ENCODE measurements at regions of chr4 and their contacts with region 1.

Region 1: DNA sequence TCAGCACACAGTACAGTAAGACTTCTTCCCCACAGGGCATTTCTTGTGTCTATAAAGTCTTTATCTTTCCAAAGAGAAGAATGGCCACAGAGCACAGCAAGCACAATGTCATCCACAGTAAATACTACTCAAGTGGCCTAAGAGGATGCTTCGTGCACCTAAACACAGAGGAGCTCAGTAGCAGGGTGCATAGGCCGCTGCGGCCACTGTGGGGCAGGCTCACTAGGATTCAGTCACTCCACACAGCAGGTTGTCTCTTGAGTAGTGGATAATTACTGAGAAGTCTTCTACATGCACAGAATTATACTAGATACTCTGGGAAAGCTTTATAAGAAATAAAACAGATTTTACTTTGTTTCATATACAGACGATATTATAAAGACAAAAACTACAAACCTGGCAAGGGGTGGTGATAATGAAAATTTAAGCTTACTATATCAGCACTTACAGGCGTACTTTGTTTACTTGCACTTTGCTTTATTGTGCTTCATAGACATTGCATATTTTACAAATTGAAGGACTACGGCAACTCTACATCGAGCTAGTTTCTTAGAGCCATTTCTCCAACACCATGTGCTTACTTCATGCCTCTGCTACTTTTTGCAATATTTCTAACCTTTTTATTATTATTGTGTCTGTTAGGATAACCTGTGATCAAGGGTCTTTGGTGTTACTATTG is 78.5 kb downstream of the PRDM5 start:
- DNase-seq: peak; percentile 13 to 61
- H3K4me3 ChIP-seq: no peak overlapping the region
- H3K27ac ChIP-seq: no peak overlapping the region
- H3K4me1 ChIP-seq: no peaks in the 10 kb centered on the region
- H3K27me3 ChIP-seq: no peaks in the 10 kb centered on the region
- CTCF ChIP-seq: peak; percentile 67 to 81 (median 78)
- EP300 ChIP-seq: no peak
- POLR2A ChIP-seq: no peak
- RAD21 ChIP-seq: peak; percentile 59 to 68; a peak in 3 of 4 replicates

Region 2: GRCh38 chr4:120829113-120829831 is 14.7 kb before region 1 on chr4:
- CTCF ChIA-PET with region 1: interaction called, 20 read pairs
- POLR2A ChIA-PET with region 1: no interaction called
- DNase-seq: no peak
- H3K4me3 ChIP-seq: no peak overlapping the region
- H3K27ac ChIP-seq: no peak overlapping the region
- H3K4me1 ChIP-seq: no peaks in the 10 kb centered on the region
- H3K27me3 ChIP-seq: no peaks in the 10 kb centered on the region
- CTCF ChIP-seq: no peak
- EP300 ChIP-seq: no peak
- POLR2A ChIP-seq: no peak
- RAD21 ChIP-seq: no peak

Region 3: DNA sequence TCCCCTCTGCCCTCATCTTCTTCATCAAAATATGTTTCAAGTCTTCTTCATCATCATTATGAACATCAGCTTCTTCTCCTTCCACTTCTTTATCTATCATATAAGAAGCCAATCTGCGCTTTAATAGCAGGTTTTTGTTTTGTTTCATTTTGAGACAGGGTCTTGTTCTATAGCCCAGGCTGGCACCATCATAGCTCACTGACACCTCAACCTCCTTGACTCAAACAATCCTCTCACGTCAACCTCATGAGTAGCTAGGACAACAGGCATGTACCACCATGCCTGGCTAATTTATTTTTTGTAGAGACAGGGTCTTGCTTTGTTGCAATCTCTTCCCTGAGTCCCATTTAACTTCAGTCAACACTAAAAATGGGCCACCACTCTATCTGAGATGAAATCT is 51.6 kb after region 1 on chr4:
- CTCF ChIA-PET with region 1: interaction called, 10 read pairs
- POLR2A ChIA-PET with region 1: no interaction called
- DNase-seq: no peak
- H3K4me3 ChIP-seq: no peak overlapping the region
- H3K27ac ChIP-seq: no peak overlapping the region
- H3K4me1 ChIP-seq: no peaks in the 10 kb centered on the region
- H3K27me3 ChIP-seq: no peaks in the 10 kb centered on the region
- CTCF ChIP-seq: no peak
- EP300 ChIP-seq: no peak
- POLR2A ChIP-seq: no peak
- RAD21 ChIP-seq: no peak

Measured in H1 (cell line).